GM10248 (cell line): ENCODE measurements at regions of chr11 and their contacts with region 1.

Region 1: DNA sequence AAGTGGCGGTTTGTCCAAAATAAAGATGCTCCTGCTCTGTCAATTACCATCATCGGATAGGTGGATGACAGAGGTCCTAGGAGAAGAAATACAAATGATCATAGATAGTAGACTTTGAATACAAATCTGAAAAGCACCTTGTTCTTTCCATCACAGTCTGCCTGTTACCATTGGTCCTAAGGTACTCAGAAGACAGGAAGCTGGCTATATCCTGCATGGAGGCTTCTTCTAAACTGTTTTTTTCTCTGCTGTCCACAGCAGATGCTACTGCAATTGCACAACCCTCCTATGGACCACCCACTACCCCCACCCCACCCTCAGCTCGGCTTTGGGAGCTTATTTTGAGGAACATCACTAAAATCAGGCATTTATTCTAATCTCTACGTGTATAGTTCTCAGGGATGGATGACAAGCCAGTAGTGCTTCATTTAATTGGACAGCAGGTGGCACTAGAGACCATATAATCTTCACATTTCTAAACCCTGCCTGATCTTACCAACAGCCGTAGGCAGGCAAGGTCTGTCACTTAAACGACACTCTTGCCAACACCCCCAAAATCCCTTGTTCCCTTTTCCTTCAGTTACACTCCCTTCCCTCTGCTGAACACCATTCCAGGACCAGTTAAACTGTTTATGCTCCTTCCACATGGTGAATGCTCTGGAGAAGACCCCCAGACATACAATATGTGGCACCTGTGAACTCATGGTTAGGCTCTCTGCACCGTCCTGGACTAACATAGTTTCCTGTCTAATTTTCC is 6.6 kb upstream of the PTS start:
- DNase-seq: peak; percentile 68
- CTCF ChIP-seq: peak; percentile 60

Region 2: DNA sequence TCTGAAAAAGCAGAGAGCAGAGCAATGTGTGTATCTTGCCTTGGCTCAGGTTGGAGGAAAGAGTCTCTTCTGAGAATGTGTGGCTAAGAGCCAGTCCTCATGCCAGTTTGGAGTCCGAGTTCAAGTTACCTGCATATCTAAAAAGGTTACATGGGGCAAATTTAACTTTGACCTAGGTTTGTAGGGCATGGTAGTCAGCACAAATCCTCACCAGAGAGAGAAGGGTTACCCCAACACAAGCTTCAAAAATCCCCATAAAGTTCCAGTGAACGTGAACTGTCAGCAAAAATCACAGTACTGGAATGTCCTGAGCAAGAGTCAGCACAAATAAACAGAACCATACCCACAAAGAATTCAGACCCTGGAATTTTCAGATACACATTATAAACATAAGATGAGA is 119.2 kb before region 1 on chr11:
- CTCF ChIA-PET with region 1: no interaction called
- POLR2A ChIA-PET with region 1: no interaction called
- DNase-seq: no peak
- CTCF ChIP-seq: no peak

Region 3: GRCh38 chr11:112231952-112232351 is 12.3 kb after region 1 on chr11:
- CTCF ChIA-PET with region 1: interaction called, 10 read pairs
- POLR2A ChIA-PET with region 1: no interaction called
- DNase-seq: no peak
- CTCF ChIP-seq: no peak

Region 4: DNA sequence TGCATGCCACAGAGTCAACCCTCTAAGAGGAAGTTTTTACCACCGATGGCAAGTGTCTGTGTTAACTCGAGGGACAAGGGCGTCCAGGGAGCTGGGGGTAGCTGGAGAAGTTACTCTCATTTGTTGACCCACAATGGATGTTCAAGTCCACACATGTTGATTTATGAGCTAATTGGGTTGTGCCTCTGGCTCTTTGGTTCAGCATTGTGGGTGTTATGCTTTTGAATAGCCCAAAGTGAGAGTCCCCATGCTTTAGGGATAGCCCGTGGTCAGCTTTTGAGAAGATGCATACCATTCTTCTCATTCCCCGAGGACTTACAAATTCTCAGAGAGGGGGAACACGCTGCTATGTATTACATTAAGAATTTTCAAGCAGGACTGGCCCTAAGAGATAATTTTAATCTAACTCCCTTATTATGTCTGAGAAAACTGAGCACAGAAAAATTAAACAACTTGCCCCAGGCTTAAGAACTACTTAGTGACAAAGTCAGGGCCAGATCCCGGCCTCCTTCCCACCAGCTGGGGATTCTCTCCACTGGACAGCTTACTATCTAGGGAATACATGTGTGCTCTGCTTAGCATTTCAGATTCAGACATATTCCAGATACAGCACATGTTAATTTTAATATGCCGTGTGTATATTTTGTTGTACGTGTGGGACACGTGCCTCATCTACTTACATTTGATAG is 46.2 kb after region 1 on chr11:
- CTCF ChIA-PET with region 1: interaction called, 17 read pairs
- POLR2A ChIA-PET with region 1: no interaction called
- DNase-seq: no peak
- CTCF ChIP-seq: no peak

Region 5: GRCh38 chr11:112499221-112500204 is 279.9 kb after region 1 on chr11:
- CTCF ChIA-PET with region 1: no interaction called
- POLR2A ChIA-PET with region 1: no interaction called
- DNase-seq: no peak
- CTCF ChIP-seq: no peak